Endothelial cell of umbilical vein (primary cell): ENCODE measurements at regions of chr18 and their contacts with region 1.

Region 1: GRCh38 chr18:12327510-12328178 is 19.6 kb downstream of the TUBB6 start:
- DNase-seq: peak; percentile 64
- H3K4me3 ChIP-seq: no peak overlapping the region
- H3K27ac ChIP-seq: no peak overlapping the region
- H3K4me1 ChIP-seq: no peaks in the 10 kb centered on the region
- H3K27me3 ChIP-seq: no peaks in the 10 kb centered on the region
- CTCF ChIP-seq: peak; percentile 96 to 97
- POLR2A ChIP-seq: no peak

Region 2: GRCh38 chr18:11658989-11659388 is 668.7 kb before region 1 on chr18:
- CTCF ChIA-PET with region 1: no interaction called
- POLR2A ChIA-PET with region 1: no interaction called
- dilution Hi-C with region 1: no loop called
- intact Hi-C with region 1: no loop called
- DNase-seq: no peak
- H3K4me3 ChIP-seq: no peak overlapping the region
- H3K27ac ChIP-seq: no peak overlapping the region
- H3K4me1 ChIP-seq: no peaks in the 10 kb centered on the region
- H3K27me3 ChIP-seq: peaks cover 0 to 2% of the 10 kb centered on the region in 2 experiments
- CTCF ChIP-seq: no peak
- POLR2A ChIP-seq: no peak

Region 3: GRCh38 chr18:12278741-12279682 is 48.6 kb before region 1 on chr18:
- CTCF ChIA-PET with region 1: interaction called, 23 read pairs
- POLR2A ChIA-PET with region 1: interaction called, 4 read pairs
- dilution Hi-C with region 1: no loop called
- intact Hi-C with region 1: no loop called
- DNase-seq: peak; percentile 93
- H3K4me3 ChIP-seq: peak overlapping the region; percentile 9 to 44 (median 30)
- H3K27ac ChIP-seq: peak overlapping the region; percentile 89
- H3K4me1 ChIP-seq: peaks cover 34% of the 10 kb centered on the region
- H3K27me3 ChIP-seq: no peaks in the 10 kb centered on the region
- CTCF ChIP-seq: peak in 1 of 2 donors; percentile 23
- POLR2A ChIP-seq: peak; percentile 86

Region 4: DNA sequence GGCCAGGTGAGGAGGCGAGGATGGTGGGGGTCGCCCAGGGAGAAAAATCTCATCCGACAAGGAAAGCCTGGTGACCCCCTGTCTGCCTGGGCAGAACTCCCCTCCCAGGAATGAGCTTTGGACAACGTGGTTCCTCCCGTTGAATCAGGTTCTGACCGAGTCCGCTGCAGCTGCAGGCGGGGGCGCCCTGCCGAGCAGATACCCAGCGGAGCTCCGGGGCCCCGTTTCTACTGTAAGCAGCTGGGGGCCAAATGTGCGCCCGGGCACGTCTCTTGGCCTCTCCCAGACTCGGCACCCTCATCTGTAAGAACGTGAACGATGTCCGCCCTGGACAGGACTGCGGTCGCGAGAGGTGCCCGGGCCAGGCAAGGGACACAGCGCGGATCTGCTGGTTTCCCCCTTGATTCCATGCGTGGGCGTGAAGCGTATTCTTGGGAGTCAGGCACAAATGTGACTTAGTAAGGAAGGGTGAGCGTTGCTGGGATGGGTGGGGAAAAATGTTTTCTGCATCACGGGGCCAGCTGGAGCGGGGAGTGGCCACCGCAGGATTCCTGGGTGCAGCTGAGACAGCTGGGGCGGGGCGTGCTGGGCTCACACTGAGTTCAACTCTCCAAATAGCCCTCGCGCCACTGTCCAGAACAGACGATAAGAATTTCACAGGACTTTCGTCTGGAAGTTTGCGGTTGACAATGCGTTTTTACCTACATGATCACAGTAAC is 39.8 kb before region 1 on chr18:
- CTCF ChIA-PET with region 1: interaction called, 21 read pairs
- POLR2A ChIA-PET with region 1: no interaction called
- dilution Hi-C with region 1: no loop called
- intact Hi-C with region 1: no loop called
- DNase-seq: peak; percentile 23
- H3K4me3 ChIP-seq: peak overlapping the region in 2 of 3 experiments; percentile 25 to 47
- H3K27ac ChIP-seq: no peak overlapping the region
- H3K4me1 ChIP-seq: no peaks in the 10 kb centered on the region
- H3K27me3 ChIP-seq: peaks cover 0 to 2% of the 10 kb centered on the region in 2 experiments
- CTCF ChIP-seq: no peak
- POLR2A ChIP-seq: no peak

Region 5: GRCh38 chr18:12295901-12296386 is 31.7 kb before region 1 on chr18:
- CTCF ChIA-PET with region 1: interaction called, 15 read pairs
- POLR2A ChIA-PET with region 1: no interaction called
- dilution Hi-C with region 1: no loop called
- intact Hi-C with region 1: no loop called
- DNase-seq: no peak
- H3K4me3 ChIP-seq: no peak overlapping the region
- H3K27ac ChIP-seq: peak overlapping the region; percentile 85
- H3K4me1 ChIP-seq: peaks cover 14% of the 10 kb centered on the region
- H3K27me3 ChIP-seq: no peaks in the 10 kb centered on the region
- CTCF ChIP-seq: no peak
- POLR2A ChIP-seq: peak; percentile 42

Region 6: DNA sequence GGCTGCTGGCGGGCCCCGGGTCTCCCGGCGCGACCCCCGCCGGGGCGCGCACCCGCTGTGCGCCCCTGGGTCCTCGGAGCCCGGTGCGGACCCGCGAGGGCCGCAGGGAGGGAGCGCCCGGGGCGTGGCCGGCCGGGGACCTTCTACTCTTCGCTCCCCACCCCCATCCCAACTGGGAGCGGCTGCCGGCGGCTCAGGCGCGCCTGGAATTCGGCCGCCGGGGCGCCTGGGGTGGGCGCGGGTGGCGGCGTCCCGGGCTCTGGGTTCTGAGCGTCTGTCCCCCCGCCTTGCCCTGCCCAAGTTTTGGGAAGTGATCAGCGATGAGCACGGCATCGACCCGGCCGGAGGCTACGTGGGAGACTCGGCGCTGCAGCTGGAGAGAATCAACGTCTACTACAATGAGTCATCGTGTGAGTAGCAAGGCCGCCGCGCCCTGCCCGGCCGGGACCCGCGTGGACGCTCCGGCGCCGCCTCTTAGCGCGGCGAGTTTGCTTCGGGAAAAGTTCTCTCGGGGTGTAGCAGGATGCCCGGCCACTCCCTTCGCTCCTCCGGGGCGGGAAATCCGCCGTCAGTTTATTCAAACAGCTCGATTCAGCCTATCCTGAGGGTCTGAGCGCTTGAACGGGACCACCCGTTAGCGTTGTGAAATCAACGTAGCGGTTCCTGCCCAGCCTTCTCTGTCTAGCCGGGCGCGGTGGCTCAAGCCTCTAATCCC is 19.1 kb before region 1 on chr18:
- CTCF ChIA-PET with region 1: interaction called, 37 read pairs
- POLR2A ChIA-PET with region 1: interaction called, 6 read pairs
- dilution Hi-C with region 1: no loop called
- intact Hi-C with region 1: no loop called
- DNase-seq: peak; percentile 82
- H3K4me3 ChIP-seq: peak overlapping the region; percentile 43 to 84 (median 77)
- H3K27ac ChIP-seq: peak overlapping the region; percentile 90
- H3K4me1 ChIP-seq: peaks cover 31% of the 10 kb centered on the region
- H3K27me3 ChIP-seq: no peaks in the 10 kb centered on the region
- CTCF ChIP-seq: no peak
- POLR2A ChIP-seq: peak; percentile 29

Region 7: GRCh38 chr18:12340945-12341660 is 13.5 kb after region 1 on chr18:
- CTCF ChIA-PET with region 1: interaction called, 27 read pairs
- POLR2A ChIA-PET with region 1: no interaction called
- dilution Hi-C with region 1: no loop called
- intact Hi-C with region 1: no loop called
- DNase-seq: no peak
- H3K4me3 ChIP-seq: no peak overlapping the region
- H3K27ac ChIP-seq: no peak overlapping the region
- H3K4me1 ChIP-seq: peaks cover 6% of the 10 kb centered on the region
- H3K27me3 ChIP-seq: no peaks in the 10 kb centered on the region
- CTCF ChIP-seq: no peak
- POLR2A ChIP-seq: no peak

Region 8: DNA sequence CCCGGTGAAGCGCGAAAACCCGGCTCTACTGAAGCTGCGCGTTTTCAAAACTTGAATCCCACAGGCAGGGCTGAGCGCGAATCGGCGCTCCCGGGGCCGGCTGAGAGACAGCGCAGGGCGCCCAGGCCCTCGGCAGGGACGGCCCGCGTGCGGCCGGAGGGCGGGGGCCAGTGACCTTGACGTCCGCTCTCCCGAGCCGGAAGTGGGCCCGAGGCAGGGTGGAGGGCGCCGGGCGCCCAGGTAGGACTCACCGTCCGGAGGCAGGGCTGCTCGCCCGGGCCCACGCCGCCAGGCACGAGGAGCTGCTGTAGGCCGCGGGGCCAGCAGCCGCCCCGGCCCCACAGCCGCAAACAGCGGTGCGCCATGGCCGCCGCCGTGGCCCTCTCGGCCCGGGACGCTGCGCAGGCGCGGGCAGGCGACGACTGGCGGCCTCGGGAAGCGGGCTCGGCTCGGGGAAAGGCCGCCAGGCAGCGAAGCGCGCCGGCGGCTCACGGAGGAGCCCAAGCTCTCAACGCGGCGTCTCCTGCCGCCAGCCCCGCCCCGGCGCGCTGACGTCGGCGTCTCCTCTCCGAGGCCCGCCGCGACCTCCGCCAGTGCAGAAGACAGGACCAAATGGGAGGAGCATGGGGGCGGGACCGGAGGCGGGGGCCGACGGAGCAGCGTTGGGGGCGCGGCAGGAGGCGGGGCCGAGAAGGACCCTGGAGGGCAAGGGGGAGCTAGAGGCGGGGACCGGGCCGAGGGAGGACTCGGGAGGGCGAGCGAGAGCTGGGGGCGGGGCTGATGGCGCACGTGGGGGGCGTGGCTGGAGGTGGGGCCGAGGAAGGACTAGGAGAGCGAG is 49.3 kb after region 1 on chr18 and contains the start of gene AFG3L2:
- CTCF ChIA-PET with region 1: interaction called, 13 read pairs
- POLR2A ChIA-PET with region 1: interaction called, 6 read pairs
- dilution Hi-C with region 1: no loop called
- intact Hi-C with region 1: no loop called
- DNase-seq: peak; percentile 100
- H3K4me3 ChIP-seq: peak within 1 kb of the TSS; percentile 62 to 85 (median 72)
- H3K27ac ChIP-seq: peak within 1 kb of the TSS; percentile 89
- H3K4me1 ChIP-seq: peaks cover 9% of the 10 kb centered on the region
- H3K27me3 ChIP-seq: no peaks in the 10 kb centered on the region
- CTCF ChIP-seq: no peak
- POLR2A ChIP-seq: peak; percentile 93
- total RNA-seq, gene AFG3L2: 40.6 and 42.4 TPM in 2 replicates